SK-N-SH (cell line): ENCODE measurements at regions of chr17 and their contacts with region 1.

Region 1: GRCh38 chr17:70144260-70144846 is 25.0 kb upstream of the KCNJ2 start:
- DNase-seq: peak; percentile 47
- H3K4me3 ChIP-seq: no peak overlapping the region; a peak in 1 of 4 replicates
- H3K27ac ChIP-seq: no peak overlapping the region
- H3K4me1 ChIP-seq: peaks cover 0 to 3% of the 10 kb centered on the region in 2 experiments; a peak in 2 of 4 replicates
- H3K27me3 ChIP-seq: no peaks in the 10 kb centered on the region
- CTCF ChIP-seq: peak; percentile 95
- EP300 ChIP-seq: no peak
- RAD21 ChIP-seq: peak; percentile 83

Region 2: DNA sequence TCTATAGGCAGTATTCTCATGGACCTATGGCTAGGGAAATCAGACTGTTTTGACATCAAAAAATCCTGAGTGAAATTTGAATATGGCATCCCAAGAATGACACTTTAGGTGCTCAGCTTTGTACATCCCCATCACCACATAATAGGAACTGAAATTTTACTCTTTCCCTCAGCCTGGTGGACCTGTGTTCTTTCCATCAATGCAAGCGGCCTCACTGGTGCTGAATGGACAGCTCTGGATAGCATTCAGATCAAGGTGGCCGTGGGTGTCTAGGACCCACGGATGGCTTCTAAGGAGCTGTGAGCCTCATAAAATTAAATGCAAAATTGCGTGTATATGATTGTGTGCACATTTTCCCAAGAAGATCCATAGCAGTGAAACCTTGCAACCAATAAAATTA is 577.2 kb before region 1 on chr17:
- CTCF ChIA-PET with region 1: interaction called, 36 read pairs
- POLR2A ChIA-PET with region 1: no interaction called
- DNase-seq: no peak
- H3K4me3 ChIP-seq: no peak overlapping the region
- H3K27ac ChIP-seq: no peak overlapping the region
- H3K4me1 ChIP-seq: peaks cover 0 to 3% of the 10 kb centered on the region in 2 experiments; a peak in 1 of 4 replicates
- H3K27me3 ChIP-seq: no peaks in the 10 kb centered on the region
- CTCF ChIP-seq: no peak
- EP300 ChIP-seq: no peak
- RAD21 ChIP-seq: no peak

Region 3: GRCh38 chr17:70127216-70127873 is 17.0 kb before region 1 on chr17:
- CTCF ChIA-PET with region 1: interaction called, 43 read pairs
- POLR2A ChIA-PET with region 1: no interaction called
- DNase-seq: no peak
- H3K4me3 ChIP-seq: no peak overlapping the region
- H3K27ac ChIP-seq: no peak overlapping the region
- H3K4me1 ChIP-seq: no peaks in the 10 kb centered on the region; a peak in 1 of 4 replicates
- H3K27me3 ChIP-seq: no peaks in the 10 kb centered on the region
- CTCF ChIP-seq: no peak
- EP300 ChIP-seq: no peak
- RAD21 ChIP-seq: no peak

Region 4: DNA sequence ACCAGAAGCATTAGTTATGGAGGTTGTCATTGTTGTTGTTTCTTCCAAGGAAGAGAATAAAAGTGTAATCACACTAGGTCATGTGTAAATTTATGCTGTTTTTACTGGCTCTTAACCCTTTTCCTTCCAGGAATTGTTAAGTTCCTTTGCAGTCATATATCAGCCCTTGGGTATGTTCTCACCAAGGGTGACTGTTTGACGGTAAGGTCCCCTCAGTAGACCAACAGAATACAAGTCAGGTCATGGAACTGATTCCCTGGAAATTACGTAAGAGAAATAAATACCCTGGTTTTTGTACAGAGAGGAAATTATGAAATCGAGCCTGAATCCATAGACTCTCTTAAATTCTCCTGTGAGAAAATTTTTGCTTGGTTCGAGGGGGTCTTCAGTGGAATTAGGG is 13.8 kb after region 1 on chr17:
- CTCF ChIA-PET with region 1: interaction called, 16 read pairs
- POLR2A ChIA-PET with region 1: no interaction called
- DNase-seq: no peak
- H3K4me3 ChIP-seq: no peak overlapping the region
- H3K27ac ChIP-seq: no peak overlapping the region
- H3K4me1 ChIP-seq: peaks cover 0 to 14% of the 10 kb centered on the region in 2 experiments; a peak in 2 of 4 replicates
- H3K27me3 ChIP-seq: no peaks in the 10 kb centered on the region
- CTCF ChIP-seq: no peak
- EP300 ChIP-seq: no peak
- RAD21 ChIP-seq: no peak

Region 5: GRCh38 chr17:70168977-70169708 is 24.8 kb after region 1 on chr17 and contains the start of gene KCNJ2:
- CTCF ChIA-PET with region 1: interaction called, 12 read pairs
- POLR2A ChIA-PET with region 1: no interaction called
- DNase-seq: peak; percentile 97
- H3K4me3 ChIP-seq: peak within 1 kb of the TSS; percentile 85 to 86
- H3K27ac ChIP-seq: peak within 1 kb of the TSS; percentile 46 to 78
- H3K4me1 ChIP-seq: peaks cover 3 to 33% of the 10 kb centered on the region in 2 experiments; a peak in 3 of 4 replicates
- H3K27me3 ChIP-seq: no peaks in the 10 kb centered on the region
- CTCF ChIP-seq: no peak
- EP300 ChIP-seq: peak; percentile 17 to 42; a peak in 2 of 4 replicates
- RAD21 ChIP-seq: peak; percentile 9; the same call in 1 of the 2 replicates
- polyA plus RNA-seq, gene KCNJ2: 0.18 and 0.21 TPM in 2 replicates